ENCODE measurements at regions of chr7 and their contacts with region 1.

Region 1: DNA sequence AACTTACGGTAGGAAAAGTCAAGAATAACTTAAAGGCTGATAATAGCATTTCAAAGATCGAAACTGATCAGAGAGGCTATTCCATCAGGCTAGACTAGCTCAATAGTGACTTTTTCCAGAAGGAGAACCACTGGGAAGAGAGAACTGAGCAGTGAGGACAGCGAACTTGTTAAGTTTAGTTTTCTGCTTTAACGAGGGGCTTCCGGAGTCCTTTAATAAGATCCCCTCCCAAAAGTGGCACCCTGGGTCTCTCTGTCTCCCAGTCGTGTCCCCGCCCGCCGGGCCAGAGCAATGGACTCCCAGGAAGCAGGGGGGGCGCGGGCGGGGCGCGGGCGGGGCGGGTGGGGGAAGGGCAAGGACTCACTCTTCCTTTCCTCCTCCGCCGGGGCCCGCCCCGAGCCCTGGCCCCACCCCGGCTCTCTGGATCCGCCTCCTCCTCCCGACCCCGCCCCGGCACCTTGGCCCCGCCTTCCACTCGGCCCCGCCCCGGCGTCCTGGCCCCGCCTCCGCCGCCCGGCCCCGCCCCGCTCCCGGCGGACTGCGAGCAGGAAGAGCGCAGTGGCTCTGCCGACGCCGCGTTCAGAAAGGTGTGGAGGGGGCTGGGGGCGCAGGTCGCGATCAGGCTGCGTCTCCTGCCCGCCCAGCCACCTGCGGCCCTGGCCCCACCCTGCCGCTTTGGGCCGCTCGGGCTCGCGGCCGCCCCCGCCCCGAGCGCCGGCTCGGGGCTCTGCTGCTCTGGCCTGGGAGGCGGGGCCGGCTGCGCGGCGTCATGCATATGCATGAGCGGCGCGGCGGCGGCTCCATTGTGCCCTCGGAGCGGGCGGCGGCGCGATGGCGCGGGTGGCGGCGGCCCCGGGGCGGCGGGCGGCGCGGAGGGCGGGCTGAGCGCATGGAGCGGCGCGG is at the start of gene ZMIZ2:
- DNase-seq: peak; percentile 88
- H3K4me3 ChIP-seq: peak within 1 kb of the TSS; percentile 46 to 98 (median 71)
- H3K27ac ChIP-seq: peak within 1 kb of the TSS; percentile 82
- H3K4me1 ChIP-seq: peaks cover 22% of the 10 kb centered on the region
- H3K27me3 ChIP-seq: no peaks in the 10 kb centered on the region
- CTCF ChIP-seq: no peak
- POLR2A ChIP-seq: peak; percentile 68
- total RNA-seq, gene ZMIZ2: 87.5 and 88.6 TPM in 2 replicates

Region 2: GRCh38 chr7:44082541-44083207 is 665.6 kb before region 1 on chr7:
- CTCF ChIA-PET with region 1: no interaction called
- POLR2A ChIA-PET with region 1: no interaction called
- dilution Hi-C with region 1: no loop called
- intact Hi-C with region 1: no loop called
- DNase-seq: peak; percentile 98
- H3K4me3 ChIP-seq: peak overlapping the region; percentile 63 to 79 (median 72)
- H3K27ac ChIP-seq: peak overlapping the region; percentile 50
- H3K4me1 ChIP-seq: peaks cover 8% of the 10 kb centered on the region
- H3K27me3 ChIP-seq: no peaks in the 10 kb centered on the region
- CTCF ChIP-seq: no peak
- POLR2A ChIP-seq: peak; percentile 72

Region 3: GRCh38 chr7:44581879-44582603 is 166.3 kb before region 1 on chr7 and contains the start of gene TMED4:
- CTCF ChIA-PET with region 1: no interaction called
- POLR2A ChIA-PET with region 1: no interaction called
- dilution Hi-C with region 1: no loop called
- intact Hi-C with region 1: loop called (anchors 2 kb)
- DNase-seq: peak; percentile 99
- H3K4me3 ChIP-seq: peak within 1 kb of the TSS; percentile 34 to 78 (median 67)
- H3K27ac ChIP-seq: peak within 1 kb of the TSS; percentile 73
- H3K4me1 ChIP-seq: peaks cover 8% of the 10 kb centered on the region
- H3K27me3 ChIP-seq: no peaks in the 10 kb centered on the region
- CTCF ChIP-seq: no peak
- POLR2A ChIP-seq: peak; percentile 98
- total RNA-seq, gene TMED4: 63.4 and 65.4 TPM in 2 replicates

Region 4: DNA sequence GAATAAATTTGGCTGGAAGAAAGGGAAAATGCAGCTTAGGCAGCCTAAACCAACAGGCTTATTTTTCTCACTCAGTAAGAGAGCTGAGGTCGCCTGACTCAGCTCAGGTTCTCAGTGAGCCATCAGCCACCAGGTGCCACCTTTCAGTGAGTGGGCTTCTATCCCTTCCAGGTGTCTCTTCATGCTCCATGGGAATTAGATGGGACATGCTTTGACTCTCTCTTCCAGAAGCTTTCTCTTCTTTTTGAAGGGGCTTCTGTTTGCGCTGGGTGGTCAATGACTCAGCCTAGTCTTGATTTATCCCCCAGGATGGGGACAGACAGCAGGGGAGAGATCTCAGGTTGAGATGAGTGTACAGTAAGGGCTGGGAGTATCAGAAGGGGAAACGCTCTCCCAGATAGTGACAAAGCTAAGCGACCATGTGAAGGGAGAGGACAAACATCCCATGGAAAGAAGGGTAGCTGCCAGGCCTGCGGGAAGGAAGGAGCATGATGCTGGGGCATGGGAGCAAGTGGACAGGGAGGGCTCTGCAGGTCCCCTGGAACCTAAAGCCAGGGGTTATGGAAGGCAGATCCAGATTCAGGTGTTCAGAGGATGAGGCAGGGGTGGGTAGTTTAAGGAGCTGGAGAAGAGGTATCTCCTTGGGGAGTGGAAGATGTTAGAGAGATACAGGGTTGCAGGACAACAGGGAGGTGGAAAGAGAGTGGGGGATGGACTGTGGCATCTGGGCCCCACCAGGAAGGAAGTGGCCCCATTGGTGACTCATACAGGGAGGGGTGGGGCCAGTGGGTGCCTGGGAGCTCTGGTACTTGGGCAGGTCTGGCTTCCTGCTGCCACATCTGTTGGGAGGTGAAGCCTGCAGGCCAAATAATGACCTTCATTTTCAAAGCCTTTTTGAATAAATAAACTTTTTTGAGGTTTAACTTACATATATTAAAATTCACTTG is 109.4 kb before region 1 on chr7:
- CTCF ChIA-PET with region 1: no interaction called
- POLR2A ChIA-PET with region 1: interaction called, 4 read pairs
- dilution Hi-C with region 1: no loop called
- intact Hi-C with region 1: loop called (anchors 1 kb)
- DNase-seq: peak; percentile 67
- H3K4me3 ChIP-seq: no peak overlapping the region
- H3K27ac ChIP-seq: peak overlapping the region; percentile 88
- H3K4me1 ChIP-seq: peaks cover 47% of the 10 kb centered on the region
- H3K27me3 ChIP-seq: no peaks in the 10 kb centered on the region
- CTCF ChIP-seq: no peak
- POLR2A ChIP-seq: peak; percentile 37

Region 5: GRCh38 chr7:44650772-44651171 is 97.5 kb before region 1 on chr7:
- CTCF ChIA-PET with region 1: no interaction called
- POLR2A ChIA-PET with region 1: interaction called, 11 read pairs
- dilution Hi-C with region 1: no loop called
- intact Hi-C with region 1: no loop called
- DNase-seq: no peak
- H3K4me3 ChIP-seq: no peak overlapping the region
- H3K27ac ChIP-seq: no peak overlapping the region
- H3K4me1 ChIP-seq: no peaks in the 10 kb centered on the region
- H3K27me3 ChIP-seq: no peaks in the 10 kb centered on the region
- CTCF ChIP-seq: no peak
- POLR2A ChIP-seq: no peak

Region 6: GRCh38 chr7:44727158-44727933 is 20.9 kb before region 1 on chr7:
- CTCF ChIA-PET with region 1: no interaction called
- POLR2A ChIA-PET with region 1: no interaction called
- dilution Hi-C with region 1: no loop called
- intact Hi-C with region 1: loop called (anchors 1 kb)
- DNase-seq: peak; percentile 80
- H3K4me3 ChIP-seq: no peak overlapping the region
- H3K27ac ChIP-seq: peak overlapping the region; percentile 67
- H3K4me1 ChIP-seq: peaks cover 16% of the 10 kb centered on the region
- H3K27me3 ChIP-seq: no peaks in the 10 kb centered on the region
- CTCF ChIP-seq: no peak
- POLR2A ChIP-seq: peak; percentile 48

Region 7: DNA sequence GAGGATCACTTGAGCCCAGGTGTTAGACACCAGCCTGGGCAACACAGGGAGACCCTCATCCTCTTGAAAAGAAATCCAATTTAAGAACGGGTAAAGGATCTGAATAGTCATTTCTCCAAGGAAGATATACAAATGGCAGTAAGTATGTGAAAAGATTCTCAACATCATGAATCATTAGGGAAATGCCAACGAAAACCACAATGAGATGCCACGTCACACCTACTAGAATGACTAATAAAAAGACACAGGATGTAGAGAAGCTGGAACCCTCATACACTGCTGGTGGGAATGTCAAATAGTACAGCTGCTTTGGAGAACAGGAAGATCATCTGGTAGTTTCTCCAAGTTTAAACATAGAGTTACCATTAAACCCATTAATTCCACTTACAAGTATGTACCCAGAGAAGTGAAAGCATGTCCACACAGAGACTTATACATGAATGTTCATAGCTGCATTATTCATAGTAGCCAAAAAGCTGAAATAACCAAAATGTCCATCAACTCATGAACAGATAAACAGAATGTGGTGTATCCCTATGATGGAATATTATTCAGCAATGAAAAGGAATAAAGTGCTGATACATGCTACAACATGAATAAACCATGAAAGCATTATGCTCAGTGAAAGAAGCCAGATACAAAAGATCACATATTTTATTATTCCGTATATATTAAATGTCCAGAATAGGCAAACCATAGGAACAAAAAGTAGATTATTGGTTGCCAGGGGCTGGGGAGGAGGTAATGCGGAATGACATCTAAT is 12.7 kb before region 1 on chr7:
- CTCF ChIA-PET with region 1: interaction called, 3 read pairs
- POLR2A ChIA-PET with region 1: no interaction called
- dilution Hi-C with region 1: no loop called
- intact Hi-C with region 1: loop called (anchors 1 kb)
- DNase-seq: peak; percentile 92
- H3K4me3 ChIP-seq: peak overlapping the region in 1 of 3 experiments; percentile 66
- H3K27ac ChIP-seq: peak overlapping the region; percentile 100
- H3K4me1 ChIP-seq: peaks cover 20% of the 10 kb centered on the region
- H3K27me3 ChIP-seq: no peaks in the 10 kb centered on the region
- CTCF ChIP-seq: no peak
- POLR2A ChIP-seq: no peak

Measured in endothelial cell of umbilical vein (primary cell).